Gastrocnemius medialis (tissue), 4 donors: ENCODE measurements at regions of chr21 and their contacts with region 1.

Region 1: DNA sequence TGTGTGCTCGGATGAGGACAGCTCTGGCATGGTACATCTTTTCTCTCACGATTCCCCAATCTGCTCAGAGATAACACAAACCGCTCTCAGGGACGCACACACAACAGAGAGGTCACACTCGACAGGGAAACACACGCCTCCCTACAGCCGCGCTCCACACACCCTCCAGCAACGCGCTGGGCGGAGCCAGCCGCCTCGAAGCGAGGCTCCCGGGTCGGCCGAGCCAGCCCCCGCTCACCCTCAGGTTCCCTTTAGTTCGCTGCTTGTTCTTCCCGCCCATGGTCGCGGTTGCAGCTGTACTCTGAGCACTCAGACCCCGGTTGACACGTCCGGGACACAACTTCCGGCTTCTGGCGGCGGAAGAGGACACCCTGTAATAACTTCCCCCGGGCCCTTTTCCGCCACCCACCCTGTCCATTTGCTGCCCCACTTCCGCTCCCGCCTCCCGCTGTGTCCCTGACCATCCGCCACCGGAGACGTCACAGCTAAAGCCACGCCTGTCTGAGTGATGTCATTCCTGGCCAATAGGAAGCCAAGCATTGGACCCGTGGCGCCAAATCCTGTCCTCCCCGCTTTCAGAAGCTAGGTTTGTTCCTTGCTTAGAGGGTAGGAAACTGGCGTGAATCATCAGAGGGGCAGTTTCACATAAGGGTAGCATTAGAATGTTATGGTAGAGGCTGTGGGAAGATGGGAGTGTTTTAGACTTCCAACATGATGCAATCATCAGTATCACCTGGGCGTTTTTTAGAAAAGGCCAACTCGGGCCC is at the start of gene LTN1:
- DNase-seq: peak; percentile 99
- ATAC-seq: peak; percentile 98 to 99
- H3K4me3 ChIP-seq: peak within 1 kb of the TSS; percentile 89 to 99 (median 97)
- H3K27ac ChIP-seq: peak within 1 kb of the TSS; percentile 89 to 98 (median 96)
- H3K4me1 ChIP-seq: peaks cover 17 to 27% of the 10 kb centered on the region in 2 donors
- H3K27me3 ChIP-seq: no peaks in the 10 kb centered on the region
- CTCF ChIP-seq: peak in 1 of 5 experiments; percentile 6
- POLR2A ChIP-seq: peak; percentile 65 to 79
- total RNA-seq, gene LTN1: 22.7 to 33.3 (median 23.2) TPM

Region 2: DNA sequence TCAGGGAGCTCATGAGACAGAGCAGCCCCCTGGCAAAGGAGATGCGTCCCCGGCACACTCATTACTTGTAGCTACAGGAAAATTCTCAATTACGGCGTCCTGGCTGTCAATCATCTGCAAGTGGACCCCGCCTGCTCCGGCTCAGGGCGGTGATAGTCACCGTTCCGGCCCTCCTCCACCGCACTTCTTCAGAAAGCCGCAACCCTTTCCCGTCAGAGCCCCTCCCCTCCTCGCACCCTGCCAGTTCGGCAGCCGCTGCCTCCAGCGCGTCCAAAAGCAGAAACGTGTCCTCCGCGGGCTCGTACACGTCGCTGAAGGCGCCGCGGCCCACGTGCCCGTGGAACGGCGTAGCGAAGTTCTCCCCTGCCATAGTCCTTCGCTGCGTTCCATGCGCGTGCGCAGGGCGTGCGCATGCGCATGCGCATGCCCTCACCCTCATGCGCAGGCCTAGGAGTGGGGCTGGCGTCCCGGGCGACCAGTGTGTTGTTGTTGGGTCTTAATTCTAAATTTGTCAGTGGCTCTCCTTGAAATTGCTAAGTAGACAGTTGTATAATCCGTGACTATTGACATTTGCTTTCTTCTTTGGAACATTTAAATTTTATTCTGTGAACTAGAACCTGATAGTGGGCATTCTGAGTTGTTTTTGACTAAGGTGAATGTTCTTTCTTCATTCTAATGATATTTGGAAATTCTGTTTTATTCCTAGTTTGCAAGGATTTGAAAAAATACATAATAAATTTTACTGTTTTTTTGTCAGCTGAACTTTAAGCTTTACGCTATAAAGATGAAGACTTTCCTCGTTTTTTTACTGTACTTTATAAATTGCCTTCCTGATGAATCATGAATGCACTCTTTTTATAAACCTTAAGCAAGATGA is 107.5 kb before region 1 on chr21:
- in situ Hi-C with region 1: no loop called
- intact Hi-C with region 1: loop called (anchors 10 kb)
- DNase-seq: peak; percentile 66 to 86
- ATAC-seq: peak; percentile 94 to 97
- H3K4me3 ChIP-seq: peak overlapping the region; percentile 68 to 82 (median 70)
- H3K27ac ChIP-seq: peak overlapping the region; percentile 83 to 89 (median 88)
- H3K4me1 ChIP-seq: peaks cover 7 to 11% of the 10 kb centered on the region in 2 donors
- H3K27me3 ChIP-seq: no peaks in the 10 kb centered on the region
- CTCF ChIP-seq: no peak
- POLR2A ChIP-seq: peak; percentile 40 to 49

Region 3: GRCh38 chr21:29024474-29025327 is 32.0 kb after region 1 on chr21 and contains the start of gene USP16:
- in situ Hi-C with region 1: no loop called
- intact Hi-C with region 1: loop called (anchors 1 kb)
- DNase-seq: peak; percentile 96 to 98
- ATAC-seq: peak; percentile 99 to 100
- H3K4me3 ChIP-seq: peak within 1 kb of the TSS; percentile 66 to 87 (median 79)
- H3K27ac ChIP-seq: peak within 1 kb of the TSS; percentile 95 to 99 (median 97)
- H3K4me1 ChIP-seq: peaks cover 19 to 28% of the 10 kb centered on the region in 2 donors
- H3K27me3 ChIP-seq: no peaks in the 10 kb centered on the region
- CTCF ChIP-seq: peak in 4 of 5 experiments; percentile 35 to 45 (median 41)
- POLR2A ChIP-seq: peak; percentile 37 to 41
- total RNA-seq, gene USP16: 25.0 to 37.2 (median 32.1) TPM

Region 4: DNA sequence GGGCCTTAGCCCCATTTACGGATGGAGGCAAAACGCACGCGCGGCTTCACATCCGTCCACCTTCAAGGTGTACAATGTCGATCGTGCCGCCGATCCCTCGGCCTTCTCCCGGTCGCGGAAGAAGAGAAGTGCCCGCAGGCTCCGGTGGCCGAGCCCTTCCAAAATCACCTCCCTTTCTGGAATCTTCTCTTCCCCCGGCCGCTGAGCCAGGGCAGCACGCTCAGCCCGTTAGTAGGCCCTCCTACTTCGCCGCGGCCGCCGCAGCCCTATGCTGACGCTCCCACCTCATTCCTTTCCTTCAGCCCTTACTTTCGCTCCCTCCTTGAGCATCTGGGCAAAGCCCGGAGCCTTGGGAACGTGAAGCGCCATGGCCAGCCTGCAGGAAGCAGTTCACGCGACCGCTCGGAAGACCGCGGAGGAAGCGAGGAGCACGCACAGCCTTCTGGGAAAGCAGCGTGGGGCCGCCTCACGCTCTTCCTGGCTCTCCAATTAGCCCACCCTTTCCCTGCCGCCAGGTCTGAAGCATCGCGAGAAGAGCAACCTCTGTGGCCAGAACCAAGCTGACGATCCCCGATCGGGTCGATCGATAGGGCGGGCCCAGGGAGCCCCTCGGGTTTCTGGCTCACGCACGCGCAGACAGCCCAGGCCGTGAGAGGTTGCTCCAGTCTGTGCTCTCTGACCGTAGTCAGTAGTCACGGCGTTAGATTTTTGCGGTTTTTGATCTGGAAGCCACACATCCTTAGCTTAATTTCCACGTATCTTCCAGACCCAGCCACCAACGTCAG is 80.7 kb after region 1 on chr21 and contains the start of gene CCT8:
- in situ Hi-C with region 1: no loop called
- intact Hi-C with region 1: loop called (anchors 2 kb)
- DNase-seq: peak; percentile 99
- ATAC-seq: peak; percentile 97
- H3K4me3 ChIP-seq: peak within 1 kb of the TSS; percentile 89 to 100 (median 100)
- H3K27ac ChIP-seq: peak within 1 kb of the TSS; percentile 94 to 99 (median 98)
- H3K4me1 ChIP-seq: peaks cover 27 to 29% of the 10 kb centered on the region in 2 donors
- H3K27me3 ChIP-seq: no peaks in the 10 kb centered on the region
- CTCF ChIP-seq: peak in 1 of 5 experiments; percentile 15
- POLR2A ChIP-seq: peak; percentile 71 to 83
- total RNA-seq, gene CCT8: 91.8 to 119 (median 99.1) TPM

Region 5: GRCh38 chr21:29372063-29372802 is 379.5 kb after region 1 on chr21:
- in situ Hi-C with region 1: no loop called
- intact Hi-C with region 1: no loop called
- DNase-seq: peak; percentile 34 to 37
- ATAC-seq: peak; percentile 91 to 93
- H3K4me3 ChIP-seq: no peak overlapping the region
- H3K27ac ChIP-seq: no peak overlapping the region
- H3K4me1 ChIP-seq: peaks cover 0 to 5% of the 10 kb centered on the region in 2 donors
- H3K27me3 ChIP-seq: no peaks in the 10 kb centered on the region
- CTCF ChIP-seq: peak; percentile 77 to 88 (median 83)
- POLR2A ChIP-seq: no peak